Activated B cell treated with CpG ODN at 0.5 μM for 24 hours (primary cell): ENCODE measurements at regions of chr2 and their contacts with region 1.

Region 1: DNA sequence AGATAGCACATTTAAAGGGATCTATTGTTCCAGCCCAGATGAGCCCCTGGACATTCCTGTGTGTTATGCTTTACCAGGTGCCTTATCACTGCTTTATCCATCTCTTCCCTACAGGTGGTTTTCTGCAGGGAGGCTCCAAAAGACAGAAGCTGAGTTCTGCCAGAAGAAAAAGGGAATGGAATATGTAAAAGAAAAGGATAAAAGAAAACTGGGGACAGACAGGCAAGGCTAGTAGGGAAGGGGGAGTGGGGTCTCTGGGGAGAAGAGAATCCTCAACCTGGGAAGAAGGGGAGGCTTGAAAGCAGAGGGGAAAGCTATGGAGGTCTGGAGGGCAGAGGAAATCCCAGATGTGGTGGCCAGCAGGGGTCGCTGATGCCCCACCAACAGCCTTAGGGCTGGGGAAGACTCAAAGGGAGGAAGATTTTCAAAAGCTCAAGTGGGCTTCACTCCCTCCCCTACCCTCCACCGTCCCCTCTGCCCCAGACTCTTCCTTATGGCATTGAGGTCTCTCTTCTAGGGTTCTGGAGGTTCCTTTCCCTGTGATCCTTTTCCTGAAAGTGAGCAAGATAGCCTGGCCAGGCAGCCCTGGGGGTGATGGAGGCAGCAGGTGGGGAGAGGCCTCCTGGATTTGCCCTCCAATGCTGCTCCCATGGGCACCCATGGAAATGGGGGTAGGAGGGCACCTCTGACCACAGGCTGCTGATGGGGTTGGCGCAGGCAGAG is 178.1 kb upstream of the PKDCC start:
- DNase-seq: peak; percentile 69
- ATAC-seq: peak; percentile 75
- H3K4me3 Mint-ChIP-seq: no peak overlapping the region
- H3K27ac Mint-ChIP-seq: no peak overlapping the region
- H3K4me1 Mint-ChIP-seq: no peaks in the 10 kb centered on the region
- H3K27me3 Mint-ChIP-seq: peaks cover 16% of the 10 kb centered on the region
- CTCF ChIP-seq: peak; percentile 55

Region 2: GRCh38 chr2:42086500-42086953 is 216.8 kb after region 1 on chr2:
- CTCF ChIA-PET with region 1: interaction called, 312 read pairs
- POLR2A ChIA-PET with region 1: interaction called, 3 read pairs
- intact Hi-C with region 1: loop called (anchors 1 kb)
- DNase-seq: no peak
- ATAC-seq: peak; percentile 71
- H3K4me3 Mint-ChIP-seq: no peak overlapping the region
- H3K27ac Mint-ChIP-seq: no peak overlapping the region
- H3K4me1 Mint-ChIP-seq: peaks cover 5% of the 10 kb centered on the region
- H3K27me3 Mint-ChIP-seq: peaks cover 8% of the 10 kb centered on the region
- CTCF ChIP-seq: peak; percentile 58

Region 3: DNA sequence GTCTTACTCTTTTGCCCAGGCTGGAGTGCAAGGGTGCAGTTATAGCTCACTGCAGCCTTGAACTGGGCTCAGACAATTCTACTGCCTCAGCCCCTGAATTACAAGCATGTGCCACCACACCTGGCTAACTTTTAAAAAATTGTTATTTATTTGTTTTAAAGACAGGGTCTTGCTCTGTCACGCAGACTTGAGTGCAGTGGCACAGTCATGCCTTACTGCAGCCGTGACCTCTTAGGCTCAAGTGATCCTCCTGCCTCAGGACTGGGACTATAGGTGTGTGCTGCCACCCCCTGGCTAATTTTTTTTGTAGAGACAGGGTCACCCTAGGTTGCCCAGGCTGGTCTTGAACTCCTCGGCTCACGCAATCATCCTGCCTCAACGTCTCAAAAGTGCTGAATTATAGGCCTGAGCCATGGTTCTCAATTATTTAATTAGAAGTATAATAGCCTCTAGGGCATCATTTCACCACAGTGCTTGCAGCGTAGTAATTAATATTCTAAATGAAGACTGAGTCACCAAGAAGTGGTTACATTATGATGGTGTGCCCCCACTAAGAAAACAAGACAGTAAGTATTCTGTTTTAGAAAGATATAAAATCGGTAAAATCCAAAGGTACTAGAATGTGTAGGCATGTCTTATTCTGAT is 369.1 kb after region 1 on chr2:
- CTCF ChIA-PET with region 1: interaction called, 12 read pairs
- POLR2A ChIA-PET with region 1: no interaction called
- intact Hi-C with region 1: loop called (anchors 1 kb)
- DNase-seq: no peak
- ATAC-seq: peak; percentile 93
- H3K4me3 Mint-ChIP-seq: no peak overlapping the region
- H3K27ac Mint-ChIP-seq: no peak overlapping the region
- H3K4me1 Mint-ChIP-seq: peaks cover 82% of the 10 kb centered on the region
- H3K27me3 Mint-ChIP-seq: no peaks in the 10 kb centered on the region
- CTCF ChIP-seq: no peak

Region 4: GRCh38 chr2:42328148-42328833 is 458.6 kb after region 1 on chr2:
- CTCF ChIA-PET with region 1: interaction called, 20 read pairs
- POLR2A ChIA-PET with region 1: no interaction called
- intact Hi-C with region 1: loop called (anchors 5 kb)
- DNase-seq: no peak
- ATAC-seq: no peak
- H3K4me3 Mint-ChIP-seq: no peak overlapping the region
- H3K27ac Mint-ChIP-seq: no peak overlapping the region
- H3K4me1 Mint-ChIP-seq: no peaks in the 10 kb centered on the region
- H3K27me3 Mint-ChIP-seq: no peaks in the 10 kb centered on the region
- CTCF ChIP-seq: no peak

Region 5: DNA sequence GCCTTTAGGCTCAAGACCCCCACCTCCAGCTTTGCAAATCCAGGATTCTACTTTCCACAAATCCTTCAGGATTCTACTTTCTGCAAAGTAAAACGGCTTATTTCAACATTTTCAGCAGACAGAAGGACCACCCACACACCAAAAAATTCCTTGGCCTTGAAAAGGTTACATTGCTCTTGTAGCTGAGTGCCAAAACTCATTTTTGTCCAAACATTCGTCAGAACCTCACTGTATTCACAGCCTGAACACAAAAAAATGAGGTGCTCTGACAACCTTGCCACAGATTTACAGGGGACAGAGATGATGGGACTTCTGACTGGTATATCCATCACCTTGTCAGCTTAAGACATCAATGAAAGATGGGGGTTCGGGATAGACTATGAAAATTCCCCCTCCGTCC is 554.3 kb after region 1 on chr2:
- CTCF ChIA-PET with region 1: no interaction called
- POLR2A ChIA-PET with region 1: no interaction called
- intact Hi-C with region 1: no loop called
- DNase-seq: no peak
- ATAC-seq: no peak
- H3K4me3 Mint-ChIP-seq: no peak overlapping the region
- H3K27ac Mint-ChIP-seq: no peak overlapping the region
- H3K4me1 Mint-ChIP-seq: no peaks in the 10 kb centered on the region
- H3K27me3 Mint-ChIP-seq: peaks cover 15% of the 10 kb centered on the region
- CTCF ChIP-seq: no peak